HAP-1 (cell line): ENCODE measurements at regions of chr6 and their contacts with region 1.

Region 1: DNA sequence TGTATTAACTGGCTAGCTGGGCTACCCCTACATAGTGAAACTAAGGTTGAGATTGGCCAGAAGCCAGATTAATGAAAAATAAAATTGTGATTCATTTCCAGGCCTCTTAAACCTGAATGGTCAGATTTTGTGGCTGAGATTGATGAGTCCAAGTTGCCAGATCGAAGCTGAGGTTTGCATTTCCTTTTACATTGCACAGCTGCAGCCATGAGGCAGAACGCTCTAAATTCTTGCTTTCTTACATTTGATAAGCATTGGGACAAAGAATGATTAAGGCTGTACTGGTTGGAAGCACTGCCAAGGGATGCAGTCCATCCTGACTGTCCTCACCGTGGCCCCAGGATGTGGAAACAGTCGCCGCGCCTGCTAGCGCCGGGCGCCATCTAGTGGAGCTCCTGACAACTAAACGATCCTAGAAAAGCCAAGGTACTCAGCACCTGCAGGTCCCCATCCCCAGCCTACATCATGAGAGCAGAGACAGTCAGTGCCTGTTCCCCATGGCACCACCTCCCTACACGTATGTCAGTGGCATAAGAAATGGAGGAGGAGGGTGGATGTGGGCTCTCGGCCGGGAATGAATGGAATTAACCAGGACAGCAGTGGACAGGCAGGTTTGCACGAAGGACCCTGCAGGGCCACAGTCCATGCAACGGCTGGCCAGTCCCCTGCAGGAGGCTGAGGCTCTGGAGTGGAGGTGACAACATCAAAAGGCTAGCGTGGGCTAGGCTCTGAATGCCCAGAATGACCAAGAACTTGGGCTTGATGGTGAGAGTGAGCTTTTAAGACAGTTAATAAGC is 19.0 kb downstream of the PXDC1 start:
- DNase-seq: peak; percentile 55 to 82
- H3K4me3 ChIP-seq: no peak overlapping the region
- H3K4me1 ChIP-seq: no peaks in the 10 kb centered on the region
- H3K27me3 ChIP-seq: no peaks in the 10 kb centered on the region

Region 2: DNA sequence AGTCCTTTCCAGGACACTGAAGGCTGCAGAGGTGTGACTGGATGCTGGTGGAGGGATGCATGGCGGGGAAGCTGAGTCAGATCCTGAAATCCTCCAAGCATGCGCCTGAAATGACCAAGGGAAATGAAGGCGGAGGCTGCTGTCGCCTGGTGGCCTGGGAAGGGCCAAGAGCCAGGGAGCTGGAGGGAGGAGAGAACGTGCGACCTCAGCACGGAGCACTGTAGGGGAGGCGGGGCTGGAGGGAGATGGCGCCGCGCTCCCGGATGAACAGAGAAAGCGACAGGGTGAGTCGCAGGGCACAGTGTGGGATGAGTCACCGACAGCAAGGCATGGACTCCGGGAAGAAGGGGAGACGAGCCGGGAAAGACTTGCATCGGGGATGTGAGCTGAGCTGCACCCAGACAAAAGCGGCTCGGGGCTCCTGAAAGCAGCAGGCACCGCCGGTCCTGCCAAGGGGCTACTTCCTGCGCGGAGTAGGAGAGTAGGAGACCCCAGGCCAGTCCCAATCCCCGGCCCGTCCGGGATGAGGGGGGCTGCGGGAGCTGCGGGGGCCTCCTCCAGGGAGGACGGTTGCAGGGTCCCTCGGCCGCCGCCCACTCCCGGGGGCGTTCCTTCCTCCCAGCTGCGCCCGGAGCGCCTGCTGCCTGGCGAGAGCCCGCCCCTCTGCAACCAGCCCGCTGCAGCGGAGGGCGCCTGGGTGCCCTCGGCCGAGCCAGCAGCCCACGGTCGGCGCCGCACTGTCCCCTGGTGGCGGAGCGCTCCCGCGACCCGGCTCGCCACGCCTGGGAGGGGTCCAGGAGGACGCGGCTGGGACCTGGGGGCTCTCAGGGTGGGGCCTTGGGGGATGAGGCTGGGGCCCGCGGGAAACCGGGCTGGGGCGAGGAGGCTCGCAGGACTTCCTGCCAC is 743.9 kb before region 1 on chr6:
- in situ Hi-C with region 1: loop called (anchors 10 kb)
- DNase-seq: peak; percentile 78 to 91
- H3K4me3 ChIP-seq: peak overlapping the region; percentile 56
- H3K4me1 ChIP-seq: peaks cover 21% of the 10 kb centered on the region
- H3K27me3 ChIP-seq: no peaks in the 10 kb centered on the region

Region 3: DNA sequence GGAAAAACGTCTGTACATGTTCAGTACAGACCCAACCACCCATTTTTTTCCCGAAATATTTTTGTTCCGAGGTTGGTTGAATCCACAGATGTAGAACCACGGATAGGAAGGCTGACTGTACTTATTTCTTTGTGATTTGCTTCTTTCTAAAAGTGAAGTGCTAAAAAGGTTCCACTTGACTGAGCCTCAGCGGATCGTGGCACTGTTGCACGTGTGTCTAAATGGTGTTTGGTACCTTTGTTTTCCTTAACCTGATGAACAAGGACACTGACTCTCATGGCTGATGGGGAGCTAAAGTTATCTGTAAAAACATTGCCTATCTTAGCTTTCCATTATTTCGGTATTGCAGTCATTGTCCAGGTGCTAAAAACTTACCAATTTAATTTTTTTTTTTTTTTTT is 607.9 kb before region 1 on chr6:
- in situ Hi-C with region 1: loop called (anchors 10 kb)
- DNase-seq: no peak
- H3K4me3 ChIP-seq: no peak overlapping the region
- H3K4me1 ChIP-seq: no peaks in the 10 kb centered on the region
- H3K27me3 ChIP-seq: no peaks in the 10 kb centered on the region

Region 4: DNA sequence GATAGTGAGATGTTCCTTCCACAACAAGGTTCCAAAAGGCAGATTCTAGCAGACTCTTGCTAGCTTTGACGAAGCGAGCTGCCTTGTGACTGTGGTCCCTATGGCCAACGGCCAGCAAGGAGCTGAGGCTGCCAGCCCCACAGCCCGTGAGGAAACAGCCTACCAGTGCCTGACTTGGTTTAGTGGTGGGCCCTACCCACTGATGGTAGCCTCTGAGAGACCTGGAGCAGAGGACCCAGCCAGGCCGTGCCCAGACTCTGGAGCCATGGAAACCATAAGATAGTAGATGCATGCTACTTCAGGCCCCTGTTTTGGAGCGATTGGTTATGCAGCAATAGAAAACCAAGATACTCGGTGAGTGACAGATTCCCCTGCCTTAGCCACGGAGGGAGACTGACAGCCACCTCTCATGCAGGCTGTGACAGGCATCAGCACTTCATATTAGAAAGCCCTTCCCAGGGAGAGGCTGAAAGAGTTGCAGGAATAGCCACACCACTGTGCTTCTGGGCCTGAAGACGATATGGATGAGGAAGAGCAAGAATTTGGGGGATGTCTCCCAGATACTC is 454.6 kb before region 1 on chr6:
- in situ Hi-C with region 1: loop called (anchors 5 kb)
- DNase-seq: no peak
- H3K4me3 ChIP-seq: no peak overlapping the region
- H3K4me1 ChIP-seq: no peaks in the 10 kb centered on the region
- H3K27me3 ChIP-seq: no peaks in the 10 kb centered on the region

Region 5: GRCh38 chr6:3410385-3411360 is 321.9 kb before region 1 on chr6:
- in situ Hi-C with region 1: loop called (anchors 5 kb)
- DNase-seq: peak; percentile 64 to 90
- H3K4me3 ChIP-seq: no peak overlapping the region
- H3K4me1 ChIP-seq: no peaks in the 10 kb centered on the region; the same call in 1 of the 2 replicates
- H3K27me3 ChIP-seq: no peaks in the 10 kb centered on the region

Region 6: DNA sequence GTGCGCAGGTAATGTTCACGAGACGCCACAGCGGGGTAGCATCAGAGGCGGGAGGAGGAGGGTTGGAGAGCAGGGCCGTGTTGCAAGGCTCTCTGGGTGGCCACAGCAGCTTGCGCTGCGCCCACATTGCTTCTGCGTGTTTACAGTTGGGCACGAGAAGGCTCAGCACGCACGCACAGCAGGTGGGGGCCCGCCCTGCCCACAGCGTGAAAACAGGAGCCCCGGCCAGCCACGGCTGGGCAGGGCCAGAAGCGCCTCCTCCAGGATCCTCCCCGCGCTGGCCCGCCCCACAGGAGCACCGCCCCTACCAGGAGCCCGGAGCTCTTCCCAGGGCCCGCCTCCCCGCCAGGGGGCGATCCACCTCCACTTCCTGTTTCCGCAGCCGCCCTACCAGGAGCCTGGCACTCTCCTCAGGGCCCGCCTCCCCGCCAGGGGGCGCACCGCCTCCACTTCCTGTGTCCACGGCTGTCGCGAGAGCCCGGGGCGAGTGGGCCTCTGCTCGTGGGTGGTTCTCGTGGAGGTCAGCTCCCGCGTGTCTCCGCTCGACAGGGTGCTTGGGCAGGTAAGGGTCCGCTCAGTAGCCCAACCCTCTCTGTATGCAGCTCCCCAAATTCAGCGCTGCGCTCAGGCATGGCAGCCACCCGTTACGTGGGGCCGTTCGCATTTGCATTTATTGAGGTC is 116.5 kb after region 1 on chr6 and contains the start of gene FAM50B:
- in situ Hi-C with region 1: no loop called
- DNase-seq: peak in 1 of 2 experiments; percentile 43
- H3K4me3 ChIP-seq: no peak within 1 kb of the TSS
- H3K4me1 ChIP-seq: no peaks in the 10 kb centered on the region
- H3K27me3 ChIP-seq: no peaks in the 10 kb centered on the region